Thyroid gland (tissue), 4 donors: ENCODE measurements at regions of chr20 and their contacts with region 1.

Region 1: GRCh38 chr20:25237610-25238318 is 10.1 kb upstream of the PYGB start:
- DNase-seq: no peak
- H3K4me3 ChIP-seq: no peak overlapping the region
- H3K27ac ChIP-seq: peak overlapping the region in 1 of 3 donors; percentile 49
- H3K4me1 ChIP-seq: peaks cover 11 to 33% of the 10 kb centered on the region in 2 donors
- H3K27me3 ChIP-seq: no peaks in the 10 kb centered on the region
- CTCF ChIP-seq: no peak
- POLR2A ChIP-seq: no peak

Region 2: DNA sequence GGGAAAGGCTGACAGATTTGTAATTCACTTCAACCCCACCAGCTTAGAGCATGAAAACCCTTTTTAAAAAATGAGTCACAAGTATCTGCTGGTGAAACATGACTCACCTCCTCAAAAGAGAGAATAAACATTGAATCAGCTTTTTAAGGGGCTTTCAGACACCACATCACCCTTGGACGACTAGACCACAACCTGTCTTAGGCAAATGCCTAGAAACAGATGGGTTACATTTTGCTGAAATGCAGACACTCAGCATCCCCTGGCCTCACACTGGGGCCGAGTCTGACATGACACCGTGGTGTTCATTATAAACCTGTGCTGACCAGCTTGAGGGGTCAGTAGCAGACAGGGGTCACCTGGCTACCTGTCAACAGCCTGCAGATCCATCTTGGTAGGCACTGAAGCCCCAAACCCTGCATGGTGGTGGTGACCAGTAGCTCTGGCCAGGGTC is 464.0 kb before region 1 on chr20:
- intact Hi-C with region 1: no loop called
- DNase-seq: no peak
- H3K4me3 ChIP-seq: no peak overlapping the region
- H3K27ac ChIP-seq: no peak overlapping the region
- H3K4me1 ChIP-seq: peaks cover 4 to 19% of the 10 kb centered on the region in 2 donors
- H3K27me3 ChIP-seq: no peaks in the 10 kb centered on the region
- CTCF ChIP-seq: no peak
- POLR2A ChIP-seq: no peak

Region 3: GRCh38 chr20:25294459-25295385 is 57.0 kb after region 1 on chr20:
- intact Hi-C with region 1: loop called (anchors 10 kb)
- DNase-seq: peak; percentile 45 to 49
- H3K4me3 ChIP-seq: no peak overlapping the region
- H3K27ac ChIP-seq: peak overlapping the region in 1 of 3 donors; percentile 29
- H3K4me1 ChIP-seq: peaks cover 7 to 9% of the 10 kb centered on the region in 2 donors
- H3K27me3 ChIP-seq: no peaks in the 10 kb centered on the region
- CTCF ChIP-seq: peak; percentile 21 to 81 (median 56)
- POLR2A ChIP-seq: no peak

Region 4: GRCh38 chr20:25310268-25310920 is 72.6 kb after region 1 on chr20:
- intact Hi-C with region 1: loop called (anchors 2 kb)
- DNase-seq: peak; percentile 76 to 79
- H3K4me3 ChIP-seq: no peak overlapping the region
- H3K27ac ChIP-seq: peak overlapping the region; percentile 83 to 91 (median 85)
- H3K4me1 ChIP-seq: peaks cover 20 to 31% of the 10 kb centered on the region in 2 donors
- H3K27me3 ChIP-seq: no peaks in the 10 kb centered on the region
- CTCF ChIP-seq: peak; percentile 25 to 98 (median 66)
- POLR2A ChIP-seq: no peak